Pancreas (tissue), 10 donors: ENCODE measurements at regions of chr19 and their contacts with region 1.

Region 1: DNA sequence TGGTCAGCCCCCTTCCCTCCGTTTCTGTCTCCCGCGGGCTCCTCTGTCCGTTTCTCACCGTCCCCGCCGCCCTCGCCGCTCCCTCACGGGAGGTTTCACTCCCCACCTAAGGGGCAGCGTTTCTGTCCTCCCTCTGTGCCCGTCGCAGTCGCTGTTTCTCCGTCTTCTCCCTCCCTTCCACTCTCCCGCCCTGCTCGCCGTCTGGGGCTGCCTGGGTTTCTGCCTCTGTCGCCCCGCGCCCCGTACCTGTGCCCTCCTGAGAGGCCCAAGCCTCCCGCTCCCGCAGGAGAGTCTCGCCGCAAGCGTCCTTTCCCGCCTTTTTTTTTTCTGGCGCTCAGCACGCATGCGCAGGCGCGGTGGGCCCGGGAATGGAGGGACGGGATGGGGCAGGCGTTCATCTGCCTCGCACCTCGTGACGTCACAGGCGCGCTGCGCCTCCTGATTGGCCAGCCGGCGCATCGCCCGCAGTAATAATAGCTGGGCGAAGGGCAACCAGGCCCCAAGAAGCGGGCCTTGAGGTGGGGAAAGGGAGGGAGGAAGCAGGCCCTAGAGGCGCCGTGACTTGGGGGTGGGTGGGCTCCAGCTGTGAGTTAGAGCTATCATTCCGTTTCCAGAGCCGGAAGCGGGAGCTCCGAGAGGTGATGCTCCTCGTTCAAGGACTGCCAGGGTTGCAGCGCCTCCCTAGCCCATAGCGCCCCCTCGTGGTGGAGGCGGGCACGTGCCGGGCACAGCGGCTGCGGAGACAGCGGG is 15.4 kb downstream of the SSC5D start:
- DNase-seq: peak; percentile 89 to 99 (median 92)
- ATAC-seq: peak; percentile 97 to 99 (median 98)
- H3K4me3 ChIP-seq: peak overlapping the region in 3 of 4 donors; percentile 13 to 34 (median 21)
- H3K27ac ChIP-seq: peak overlapping the region in 1 of 4 donors; percentile 17
- H3K4me1 ChIP-seq: no peaks in the 10 kb centered on the region
- H3K27me3 ChIP-seq: no peaks in the 10 kb centered on the region
- CTCF ChIP-seq: peak; percentile 97 to 99 (median 98)

Region 2: GRCh38 chr19:55136399-55137102 is 367.1 kb before region 1 on chr19:
- intact Hi-C with region 1: loop called in 2 of 3 experiments (anchors 5 kb)
- DNase-seq: no peak
- ATAC-seq: no peak
- H3K4me3 ChIP-seq: no peak overlapping the region
- H3K27ac ChIP-seq: no peak overlapping the region
- H3K4me1 ChIP-seq: no peaks in the 10 kb centered on the region
- H3K27me3 ChIP-seq: peaks cover 0 to 7% (median under 1%) of the 10 kb centered on the region in 4 donors
- CTCF ChIP-seq: no peak

Region 3: GRCh38 chr19:55146078-55146704 is 357.5 kb before region 1 on chr19:
- intact Hi-C with region 1: loop called in 1 of 3 experiments (anchors 5 kb)
- DNase-seq: no peak
- ATAC-seq: peak in 1 of 4 donors; percentile 19
- H3K4me3 ChIP-seq: no peak overlapping the region
- H3K27ac ChIP-seq: no peak overlapping the region
- H3K4me1 ChIP-seq: no peaks in the 10 kb centered on the region
- H3K27me3 ChIP-seq: peaks cover 0 to 22% (median 4%) of the 10 kb centered on the region in 4 donors
- CTCF ChIP-seq: no peak

Region 4: GRCh38 chr19:55464039-55465019 is 39.3 kb before region 1 on chr19 and contains the start of gene C19orf85:
- intact Hi-C with region 1: loop called in 1 of 3 experiments (anchors 2 kb)
- DNase-seq: peak in 2 of 6 donors; percentile 13 to 74
- ATAC-seq: no peak
- H3K4me3 ChIP-seq: no peak within 1 kb of the TSS
- H3K27ac ChIP-seq: no peak within 1 kb of the TSS
- H3K4me1 ChIP-seq: peaks cover 0 to 7% (median 5%) of the 10 kb centered on the region in 3 donors
- H3K27me3 ChIP-seq: no peaks in the 10 kb centered on the region
- CTCF ChIP-seq: no peak
- total RNA-seq, gene C19orf85: not detected